Left lung (tissue), 14 donors: ENCODE measurements at regions of chr18 and their contacts with region 1.

Region 1: DNA sequence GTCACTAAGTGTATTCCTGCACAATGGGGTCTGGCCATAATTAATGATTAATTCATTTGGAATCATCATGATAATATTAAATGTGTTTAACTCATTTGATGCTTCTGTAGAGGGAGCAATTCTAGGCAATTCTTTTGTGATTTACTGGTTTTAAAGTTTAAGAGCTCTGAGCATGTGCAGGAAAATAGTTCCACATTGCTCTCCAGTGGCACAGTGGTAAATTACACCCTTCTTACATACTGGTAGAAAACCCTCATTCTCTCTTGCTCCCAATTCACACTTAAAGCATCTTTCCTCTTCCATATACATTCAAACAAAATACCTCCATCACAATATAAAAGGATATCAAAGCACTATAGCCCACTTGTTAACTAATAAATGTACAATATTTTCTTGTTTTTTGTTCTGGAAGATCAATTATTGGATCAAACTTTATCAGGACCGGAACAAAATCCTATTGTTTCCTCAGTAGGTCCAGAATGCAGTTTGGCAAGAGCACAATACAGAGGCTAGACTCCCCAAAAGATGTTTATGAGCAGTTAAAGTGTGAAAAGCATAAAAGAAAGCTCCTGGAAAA is 844.3 kb downstream of the MBD2 start:
- DNase-seq: peak in 2 of 4 donors; percentile 25 to 40
- ATAC-seq: peak; percentile 77
- H3K4me3 ChIP-seq: no peak overlapping the region
- H3K27ac ChIP-seq: no peak overlapping the region
- H3K4me1 ChIP-seq: no peaks in the 10 kb centered on the region
- H3K27me3 ChIP-seq: no peaks in the 10 kb centered on the region
- CTCF ChIP-seq: peak; percentile 39 to 55

Region 2: DNA sequence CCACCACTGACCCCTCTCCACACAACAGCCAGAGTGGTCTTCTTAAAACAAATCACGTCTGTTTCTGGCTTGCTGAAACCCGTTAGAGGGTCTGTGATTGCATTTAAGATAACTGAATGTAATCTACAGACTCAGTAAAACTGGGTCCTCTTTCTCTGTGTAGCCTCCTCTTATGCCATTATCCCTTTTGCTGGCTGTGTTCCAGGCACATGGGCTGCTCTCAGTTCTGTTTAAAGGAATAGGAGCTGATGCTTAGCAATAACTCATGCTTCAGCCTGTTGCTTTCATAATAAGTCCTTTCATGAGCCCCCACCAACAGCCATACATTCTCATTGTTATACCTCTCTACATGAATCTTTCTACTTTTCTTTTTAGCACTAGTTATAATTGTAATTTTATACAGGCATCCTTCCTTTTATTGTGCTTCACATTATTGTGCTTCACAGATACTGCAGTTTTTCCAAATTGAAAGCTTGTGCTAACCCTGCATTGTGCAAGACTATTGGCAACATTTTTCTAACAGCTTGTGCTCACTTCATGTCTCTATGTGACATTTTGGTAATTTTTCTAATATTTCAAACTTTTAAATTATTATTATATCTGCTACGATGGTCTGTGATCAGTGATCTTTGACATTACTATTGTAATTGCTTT is 61.7 kb after region 1 on chr18:
- intact Hi-C with region 1: loop called in 1 of 2 experiments (anchors 10 kb)
- DNase-seq: no peak
- ATAC-seq: no peak
- H3K4me3 ChIP-seq: no peak overlapping the region
- H3K27ac ChIP-seq: no peak overlapping the region
- H3K4me1 ChIP-seq: no peaks in the 10 kb centered on the region
- H3K27me3 ChIP-seq: no peaks in the 10 kb centered on the region
- CTCF ChIP-seq: no peak